Right ventricle myocardium inferior (tissue), 1 donor: ENCODE measurements at regions of chr14 and their contacts with region 1.

Region 1: GRCh38 chr14:105197271-105197670 is 16.2 kb upstream of the NUDT14 start:
- DNase-seq: no peak
- ATAC-seq: peak; percentile 29

Region 2: GRCh38 chr14:105153271-105153731 is 44.0 kb before region 1 on chr14:
- intact Hi-C with region 1: loop called (anchors 2 kb)
- DNase-seq: peak; percentile 82
- ATAC-seq: peak; percentile 36

Region 3: GRCh38 chr14:105168979-105169507 is 28.2 kb before region 1 on chr14:
- intact Hi-C with region 1: loop called (anchors 2 kb)
- DNase-seq: no peak
- ATAC-seq: peak; percentile 3